ENCODE measurements at regions of chr16 and their contacts with region 1.

Region 1: DNA sequence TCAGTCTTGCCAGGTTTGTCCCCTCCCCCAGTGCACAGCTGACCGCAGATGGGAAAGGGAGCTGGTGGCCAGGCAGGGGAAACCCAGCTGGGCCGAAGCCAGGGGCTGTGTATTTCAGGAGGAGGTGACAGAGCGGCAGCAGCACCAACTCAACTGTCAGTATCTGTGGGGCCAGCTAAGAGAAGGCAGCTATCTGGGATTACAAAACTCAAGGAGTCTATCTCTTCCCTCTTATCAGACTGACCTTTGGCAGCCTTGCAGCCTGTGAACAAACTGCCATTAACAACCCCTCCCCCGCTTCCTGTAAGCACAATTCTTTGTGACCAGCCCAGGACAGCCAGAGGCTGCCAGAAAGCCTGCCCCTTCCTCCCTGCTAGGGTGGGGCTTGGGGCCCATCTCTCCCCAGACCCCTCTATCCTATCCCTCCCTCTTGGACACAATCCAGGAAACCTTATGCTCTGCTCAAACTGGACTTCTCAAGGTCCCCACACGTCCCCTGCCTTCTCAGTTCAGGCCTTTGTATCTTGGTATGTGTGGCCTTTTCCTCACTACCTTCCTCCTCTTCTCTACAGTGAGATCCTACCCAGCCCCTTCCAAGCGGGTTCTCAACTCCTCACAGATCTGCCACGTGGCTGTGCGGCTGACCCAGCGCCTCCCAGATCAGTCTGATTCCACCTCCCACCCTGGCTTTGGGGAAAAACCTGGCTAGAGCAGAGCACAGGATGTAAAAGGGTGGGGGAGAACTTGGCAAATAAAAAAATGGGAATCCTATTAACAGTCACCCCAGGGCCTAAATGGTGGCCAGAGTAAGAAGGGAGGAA is 10.5 kb downstream of the ST3GAL2 start:
- DNase-seq: peak; percentile 100
- ATAC-seq: peak; percentile 90
- H3K4me3 ChIP-seq: peak overlapping the region; percentile 15 to 64 (median 47)
- H3K27ac ChIP-seq: peak overlapping the region; percentile 96
- H3K4me1 ChIP-seq: peaks cover 90% of the 10 kb centered on the region
- H3K27me3 ChIP-seq: no peaks in the 10 kb centered on the region
- CTCF ChIP-seq: no peak
- EP300 ChIP-seq: peak; percentile 88 to 97
- POLR2A ChIP-seq: peak; percentile 74 to 75
- RAD21 ChIP-seq: peak; percentile 68

Region 2: DNA sequence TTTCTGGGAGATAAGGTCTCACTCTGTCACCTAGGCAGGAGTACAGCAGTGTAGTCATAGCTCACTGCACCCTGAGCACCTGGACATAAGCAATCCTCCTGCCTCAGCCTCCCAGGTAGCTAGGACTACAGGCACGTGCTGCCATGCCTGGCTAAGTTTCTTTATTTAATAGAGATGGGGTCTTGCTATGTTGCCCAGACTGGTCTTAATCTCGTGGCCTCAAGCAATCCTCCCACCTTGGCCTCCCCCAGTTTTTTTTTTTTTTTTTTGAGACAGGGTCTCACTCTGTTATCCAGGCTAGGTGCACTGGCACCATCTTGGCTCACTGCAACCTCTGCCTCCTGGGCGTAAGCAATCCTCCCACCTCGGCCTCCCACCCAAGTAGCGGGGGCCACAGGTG is 108.3 kb before region 1 on chr16:
- CTCF ChIA-PET with region 1: no interaction called
- POLR2A ChIA-PET with region 1: no interaction called
- in situ Hi-C with region 1: no loop called
- intact Hi-C with region 1: no loop called
- DNase-seq: no peak
- ATAC-seq: no peak
- H3K4me3 ChIP-seq: no peak overlapping the region
- H3K27ac ChIP-seq: no peak overlapping the region
- H3K4me1 ChIP-seq: no peaks in the 10 kb centered on the region
- H3K27me3 ChIP-seq: no peaks in the 10 kb centered on the region
- CTCF ChIP-seq: no peak
- EP300 ChIP-seq: no peak
- POLR2A ChIP-seq: no peak
- RAD21 ChIP-seq: no peak

Region 3: GRCh38 chr16:70410734-70411133 is 17.7 kb before region 1 on chr16:
- CTCF ChIA-PET with region 1: no interaction called
- POLR2A ChIA-PET with region 1: interaction called, 15 read pairs
- in situ Hi-C with region 1: no loop called
- intact Hi-C with region 1: no loop called
- DNase-seq: no peak
- ATAC-seq: no peak
- H3K4me3 ChIP-seq: no peak overlapping the region
- H3K27ac ChIP-seq: no peak overlapping the region
- H3K4me1 ChIP-seq: peaks cover 11% of the 10 kb centered on the region
- H3K27me3 ChIP-seq: no peaks in the 10 kb centered on the region
- CTCF ChIP-seq: no peak
- EP300 ChIP-seq: no peak
- POLR2A ChIP-seq: no peak
- RAD21 ChIP-seq: no peak

Region 4: DNA sequence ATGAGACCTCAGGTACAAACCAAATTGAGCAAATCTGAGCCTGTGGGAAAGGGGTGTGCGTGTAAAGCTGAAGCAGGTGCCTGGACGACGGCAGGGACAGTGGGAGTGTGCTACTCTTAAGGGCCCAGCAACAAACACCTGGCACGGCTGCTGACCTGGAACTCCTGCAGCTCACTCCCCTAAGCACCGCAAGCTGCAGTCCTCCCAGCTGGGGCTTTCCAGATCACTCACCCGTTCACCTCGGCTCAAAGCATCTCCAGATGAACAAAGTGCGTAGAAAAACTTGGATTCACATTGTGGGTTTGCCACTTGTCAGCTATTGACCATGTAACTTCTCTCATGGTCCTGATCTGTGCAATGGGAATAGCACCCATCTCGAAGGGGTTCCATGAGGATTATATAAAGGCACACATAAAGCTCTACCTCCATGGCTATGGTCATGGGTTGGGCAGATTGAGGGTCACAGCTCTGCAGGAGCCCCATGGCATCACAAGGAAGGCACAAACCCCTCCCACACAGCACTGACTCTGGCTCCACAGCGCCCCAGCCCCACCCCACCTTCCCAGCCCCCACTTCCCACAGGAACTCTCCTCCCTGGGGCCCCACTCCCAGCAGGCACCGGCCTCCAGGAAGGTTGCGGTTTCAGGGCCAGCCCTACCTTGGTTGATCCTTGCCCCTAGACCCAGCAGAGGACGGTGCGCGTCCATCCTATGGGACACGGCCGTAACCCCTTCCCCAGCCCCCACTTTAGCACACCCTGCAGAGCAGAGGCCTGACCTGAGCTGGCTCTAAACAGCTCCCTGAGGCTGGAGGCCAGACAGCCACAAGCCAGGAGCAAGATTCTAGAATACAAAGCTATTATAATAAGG is 11.4 kb before region 1 on chr16:
- CTCF ChIA-PET with region 1: no interaction called
- POLR2A ChIA-PET with region 1: interaction called, 38 read pairs
- in situ Hi-C with region 1: no loop called
- intact Hi-C with region 1: no loop called
- DNase-seq: peak; percentile 58
- ATAC-seq: peak; percentile 81
- H3K4me3 ChIP-seq: no peak overlapping the region
- H3K27ac ChIP-seq: peak overlapping the region; percentile 50
- H3K4me1 ChIP-seq: peaks cover 67% of the 10 kb centered on the region
- H3K27me3 ChIP-seq: no peaks in the 10 kb centered on the region
- CTCF ChIP-seq: peak; percentile 80
- EP300 ChIP-seq: peak in 1 of 2 experiments; percentile 43; a peak in 1 of 4 replicates
- POLR2A ChIP-seq: no peak
- RAD21 ChIP-seq: peak; percentile 77

Region 5: GRCh38 chr16:70438969-70439862 is 10.8 kb after region 1 on chr16 and contains the start of gene ST3GAL2:
- CTCF ChIA-PET with region 1: no interaction called
- POLR2A ChIA-PET with region 1: interaction called, 75 read pairs
- in situ Hi-C with region 1: no loop called
- intact Hi-C with region 1: loop called (anchors 1 kb)
- DNase-seq: peak; percentile 93
- ATAC-seq: peak; percentile 88
- H3K4me3 ChIP-seq: peak within 1 kb of the TSS; percentile 82 to 92 (median 89)
- H3K27ac ChIP-seq: peak within 1 kb of the TSS; percentile 69
- H3K4me1 ChIP-seq: peaks cover 66% of the 10 kb centered on the region
- H3K27me3 ChIP-seq: no peaks in the 10 kb centered on the region; a peak in 1 of 5 replicates
- CTCF ChIP-seq: peak; percentile 27
- EP300 ChIP-seq: peak in 1 of 2 experiments; percentile 54; a peak in 2 of 4 replicates
- POLR2A ChIP-seq: peak; percentile 56 to 72; a peak in 3 of 4 replicates
- RAD21 ChIP-seq: peak; percentile 51
- total RNA-seq, gene ST3GAL2: 17.8 and 24.9 TPM in 2 replicates

Measured in HepG2 (cell line).